Uterus (tissue), 4 donors: ENCODE measurements at regions of chr19 and their contacts with region 1.

Region 1: DNA sequence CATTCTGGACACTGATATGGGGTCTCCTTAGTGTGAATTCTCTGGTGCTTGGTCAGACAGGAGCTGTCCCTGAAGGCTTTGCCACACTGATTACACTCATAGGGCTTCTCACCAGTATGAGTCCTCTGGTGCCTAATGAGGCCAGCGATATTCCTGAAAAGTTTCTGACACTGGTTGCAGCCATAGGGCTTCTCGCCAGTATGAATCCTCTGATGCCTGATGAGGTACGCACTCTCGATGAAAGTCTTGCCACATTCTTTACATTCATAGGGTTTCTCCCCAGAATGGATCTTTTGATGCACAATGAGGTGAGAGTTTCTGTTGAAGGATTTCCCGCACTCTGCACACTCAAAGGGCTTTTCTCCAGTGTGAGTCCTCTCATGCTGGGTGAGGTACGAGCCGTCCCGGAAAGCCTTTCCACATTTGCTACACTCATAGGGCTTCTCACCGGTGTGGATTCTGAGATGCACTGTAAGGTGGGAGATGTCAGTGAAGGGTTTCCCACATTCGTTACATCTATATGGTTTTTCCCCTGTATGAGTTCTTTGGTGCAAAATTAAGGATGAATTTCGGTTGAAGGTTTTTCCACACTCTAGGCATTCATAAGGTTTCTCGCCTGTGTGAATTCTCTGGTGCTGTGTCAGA is 22.4 kb downstream of the ZNF329 start:
- DNase-seq: no peak
- H3K4me3 ChIP-seq: no peak overlapping the region
- H3K27ac ChIP-seq: no peak overlapping the region
- H3K4me1 ChIP-seq: no peaks in the 10 kb centered on the region
- H3K27me3 ChIP-seq: no peaks in the 10 kb centered on the region
- CTCF ChIP-seq: no peak
- POLR2A ChIP-seq: no peak

Region 2: DNA sequence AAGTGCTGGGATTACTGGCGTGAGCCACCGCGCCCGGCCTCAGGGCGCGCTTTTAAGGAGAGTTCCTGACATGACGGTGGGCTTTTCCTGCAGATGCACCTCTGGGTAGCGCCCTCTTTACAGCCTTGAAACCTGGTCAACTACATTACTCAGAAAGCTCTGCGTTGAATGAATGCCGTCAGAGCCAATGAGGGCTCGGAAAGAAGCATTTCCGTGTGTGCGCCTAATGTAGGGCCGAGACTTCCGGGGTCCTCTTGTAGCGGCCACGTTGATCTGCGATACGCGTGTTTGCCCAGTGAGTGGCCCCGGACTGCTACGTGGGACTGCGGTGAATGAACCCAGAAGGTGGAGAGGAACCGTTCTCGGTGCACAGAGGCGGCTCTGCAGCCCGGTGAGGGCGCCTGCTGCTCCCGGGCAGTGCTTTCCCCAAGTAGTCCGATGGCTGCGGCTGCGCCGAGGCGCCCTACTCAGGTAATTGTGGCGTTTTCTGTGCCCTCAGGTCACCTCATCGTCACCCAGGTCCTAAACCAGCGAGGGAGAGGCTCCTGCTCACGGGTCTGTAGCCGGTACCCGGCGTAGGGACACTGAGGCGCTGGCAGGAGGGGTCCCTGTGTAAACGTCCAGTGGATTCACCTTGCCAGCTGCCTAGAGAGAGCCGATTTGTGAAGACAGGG is 308.6 kb before region 1 on chr19:
- intact Hi-C with region 1: no loop called
- DNase-seq: peak; percentile 82 to 87
- H3K4me3 ChIP-seq: peak overlapping the region; percentile 66 to 71
- H3K27ac ChIP-seq: peak overlapping the region; percentile 74 to 86
- H3K4me1 ChIP-seq: no peaks in the 10 kb centered on the region
- H3K27me3 ChIP-seq: no peaks in the 10 kb centered on the region
- CTCF ChIP-seq: no peak
- POLR2A ChIP-seq: peak in 1 of 2 donors; percentile 42

Region 3: GRCh38 chr19:58037927-58038687 is 90.1 kb before region 1 on chr19:
- intact Hi-C with region 1: loop called (anchors 5 kb)
- DNase-seq: no peak
- H3K4me3 ChIP-seq: no peak overlapping the region
- H3K27ac ChIP-seq: no peak overlapping the region
- H3K4me1 ChIP-seq: no peaks in the 10 kb centered on the region
- H3K27me3 ChIP-seq: no peaks in the 10 kb centered on the region
- CTCF ChIP-seq: no peak
- POLR2A ChIP-seq: no peak

Region 4: GRCh38 chr19:58067240-58067912 is 60.8 kb before region 1 on chr19:
- intact Hi-C with region 1: loop called (anchors 2 kb)
- DNase-seq: no peak
- H3K4me3 ChIP-seq: no peak overlapping the region
- H3K27ac ChIP-seq: no peak overlapping the region
- H3K4me1 ChIP-seq: no peaks in the 10 kb centered on the region
- H3K27me3 ChIP-seq: no peaks in the 10 kb centered on the region
- CTCF ChIP-seq: no peak
- POLR2A ChIP-seq: no peak

Region 5: GRCh38 chr19:58170860-58171259 is 42.7 kb after region 1 on chr19:
- intact Hi-C with region 1: no loop called
- DNase-seq: no peak
- H3K4me3 ChIP-seq: no peak overlapping the region
- H3K27ac ChIP-seq: no peak overlapping the region
- H3K4me1 ChIP-seq: no peaks in the 10 kb centered on the region
- H3K27me3 ChIP-seq: no peaks in the 10 kb centered on the region
- CTCF ChIP-seq: no peak
- POLR2A ChIP-seq: no peak